ENCODE measurements at regions of chr3 and their contacts with region 1.

Region 1: DNA sequence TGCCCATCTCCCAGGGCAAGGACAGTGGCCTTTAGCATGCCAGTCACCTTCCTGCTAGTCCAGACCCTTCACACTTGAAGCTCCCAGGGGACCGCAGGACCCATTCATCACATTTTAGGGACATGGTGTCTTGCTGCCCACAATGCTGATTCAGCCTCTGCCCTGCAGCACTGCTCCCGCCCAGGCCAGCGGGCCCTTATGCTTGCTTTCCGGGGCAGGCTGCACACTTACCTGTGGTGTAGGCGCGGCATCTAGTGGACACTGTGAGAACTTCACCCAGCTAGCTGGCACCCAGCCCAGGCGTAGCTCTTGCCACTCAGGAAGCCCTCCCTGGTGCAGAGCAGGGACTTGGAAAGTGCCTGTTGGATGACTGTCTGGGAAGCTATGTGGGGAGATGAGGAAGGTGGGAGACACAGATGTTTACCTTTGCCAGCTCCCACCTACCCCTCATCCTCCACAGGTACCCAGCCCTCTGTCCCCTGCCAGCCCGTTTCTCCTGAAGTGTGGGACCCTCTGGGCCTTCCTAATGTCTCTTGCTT is 26.2 kb upstream of the NR2C2 start:
- DNase-seq: peak; percentile 72
- H3K4me3 ChIP-seq: no peak overlapping the region
- H3K27ac ChIP-seq: no peak overlapping the region
- H3K27me3 ChIP-seq: peaks cover 7% of the 10 kb centered on the region
- CTCF ChIP-seq: peak; percentile 95

Region 2: GRCh38 chr3:14672588-14672987 is 248.6 kb before region 1 on chr3:
- CTCF ChIA-PET with region 1: interaction called, 110 read pairs
- POLR2A ChIA-PET with region 1: no interaction called
- DNase-seq: no peak
- H3K4me3 ChIP-seq: no peak overlapping the region
- H3K27ac ChIP-seq: no peak overlapping the region
- H3K27me3 ChIP-seq: no peaks in the 10 kb centered on the region
- CTCF ChIP-seq: no peak

Region 3: GRCh38 chr3:14947100-14947885 is 26.1 kb after region 1 on chr3 and contains the start of gene NR2C2:
- CTCF ChIA-PET with region 1: interaction called, 10 read pairs
- POLR2A ChIA-PET with region 1: no interaction called
- DNase-seq: no peak
- H3K4me3 ChIP-seq: peak within 1 kb of the TSS; percentile 87
- H3K27ac ChIP-seq: peak within 1 kb of the TSS; percentile 100
- H3K27me3 ChIP-seq: no peaks in the 10 kb centered on the region
- CTCF ChIP-seq: no peak
- polyA plus RNA-seq, gene NR2C2: 16.1 and 17.0 TPM in 2 replicates

Region 4: GRCh38 chr3:15089201-15089600 is 168.1 kb after region 1 on chr3:
- CTCF ChIA-PET with region 1: interaction called, 10 read pairs
- POLR2A ChIA-PET with region 1: no interaction called
- DNase-seq: no peak
- H3K4me3 ChIP-seq: no peak overlapping the region
- H3K27ac ChIP-seq: no peak overlapping the region
- H3K27me3 ChIP-seq: no peaks in the 10 kb centered on the region
- CTCF ChIP-seq: no peak

Region 5: GRCh38 chr3:15205934-15206661 is 285.0 kb after region 1 on chr3 and contains the start of gene CAPN7:
- CTCF ChIA-PET with region 1: interaction called, 11 read pairs
- POLR2A ChIA-PET with region 1: no interaction called
- DNase-seq: peak; percentile 83
- H3K4me3 ChIP-seq: peak within 1 kb of the TSS; percentile 92
- H3K27ac ChIP-seq: peak within 1 kb of the TSS; percentile 75
- H3K27me3 ChIP-seq: no peaks in the 10 kb centered on the region
- CTCF ChIP-seq: peak; percentile 65
- polyA plus RNA-seq, gene CAPN7: 21.8 and 29.0 TPM in 2 replicates

Region 6: DNA sequence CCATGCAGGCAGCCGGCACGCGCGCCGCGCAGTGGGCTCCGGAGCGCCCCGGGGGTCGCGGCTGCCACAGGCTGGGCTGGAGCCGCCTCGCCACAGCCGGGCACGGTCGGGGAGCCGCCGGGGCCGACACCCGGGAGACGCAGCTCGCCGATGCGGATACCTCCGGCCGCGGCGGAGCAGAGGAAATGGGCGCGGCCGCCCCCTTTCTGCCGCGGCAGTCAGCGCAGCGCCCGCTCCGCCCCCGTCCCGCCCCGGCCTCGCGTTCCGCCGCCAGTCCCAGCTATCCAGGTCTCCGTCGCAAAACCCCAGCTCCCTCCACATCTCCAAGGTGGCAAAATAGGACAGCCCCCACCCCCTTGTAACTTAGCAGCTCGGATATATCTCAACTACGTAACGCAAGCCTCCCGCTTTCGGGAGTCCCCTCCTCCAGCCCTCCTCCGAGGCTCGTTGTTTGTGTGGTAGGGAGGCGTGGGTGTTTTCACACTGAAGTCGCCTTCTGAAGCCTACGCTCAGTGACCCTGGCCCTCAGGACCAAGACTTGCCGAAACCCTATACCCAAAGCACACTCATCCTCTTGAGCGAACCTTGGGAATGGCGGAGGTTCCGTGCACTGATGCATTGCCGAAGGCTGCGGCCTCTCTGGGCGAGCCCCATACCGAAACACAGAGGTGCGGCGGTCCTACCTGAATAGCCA is 411.4 kb after region 1 on chr3 and contains the start of gene SH3BP5:
- CTCF ChIA-PET with region 1: no interaction called
- POLR2A ChIA-PET with region 1: no interaction called
- DNase-seq: no peak
- H3K4me3 ChIP-seq: peak within 1 kb of the TSS; percentile 87
- H3K27ac ChIP-seq: no peak within 1 kb of the TSS
- H3K27me3 ChIP-seq: no peaks in the 10 kb centered on the region
- CTCF ChIP-seq: peak; percentile 56
- polyA plus RNA-seq, gene SH3BP5: 15.5 and 16.6 TPM in 2 replicates